Dorsolateral prefrontal cortex (tissue), 120 donors: ENCODE measurements at regions of chr12 and their contacts with region 1.

Region 1: DNA sequence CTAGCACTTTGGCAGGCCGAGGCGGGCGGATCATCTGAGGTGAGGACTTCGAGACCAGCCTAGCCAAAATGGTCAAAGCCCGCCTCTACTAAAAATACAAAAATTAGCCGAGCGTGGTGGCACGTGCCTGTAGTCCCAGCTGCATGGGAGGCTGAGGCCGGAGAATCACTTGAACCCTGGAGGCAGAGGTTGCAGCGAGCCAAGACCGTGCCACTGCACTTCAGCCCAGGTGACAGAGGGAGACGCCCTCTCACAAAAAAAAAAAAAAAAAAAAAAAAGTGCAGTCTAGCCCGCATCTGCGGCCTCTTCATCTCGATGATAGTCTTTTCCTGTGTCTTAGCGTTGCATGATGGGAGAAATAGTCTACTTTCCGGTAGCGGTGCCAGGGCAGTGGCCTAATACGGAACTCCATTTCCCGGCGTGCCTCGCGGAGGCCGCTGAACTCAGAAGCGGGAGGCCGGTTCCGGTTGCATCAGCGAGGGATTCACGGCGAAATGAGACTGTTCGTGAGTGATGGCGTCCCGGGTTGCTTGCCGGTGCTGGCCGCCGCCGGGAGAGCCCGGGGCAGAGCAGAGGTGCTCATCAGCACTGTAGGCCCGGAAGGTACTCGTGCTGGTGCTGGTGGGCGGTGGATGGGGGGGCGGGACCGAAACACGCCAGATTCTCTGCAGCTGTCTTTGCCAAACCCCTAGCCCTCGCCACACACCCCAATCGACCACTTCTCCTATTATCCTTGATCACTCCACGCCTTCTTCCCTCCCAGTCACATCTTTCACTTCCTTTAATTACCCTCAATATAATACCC is at the start of gene MARS1:
- DNase-seq: peak; percentile 94 to 99 (median 96)
- H3K4me3 ChIP-seq: peak within 1 kb of the TSS; percentile 69 to 99 (median 91)
- H3K27ac ChIP-seq: peak within 1 kb of the TSS in 52 of 59 donors; percentile 25 to 89 (median 74)
- H3K27me3 ChIP-seq: no peaks in the 10 kb centered on the region
- CTCF ChIP-seq: peak in 47 of 56 donors; percentile 14 to 69 (median 48)
- total RNA-seq, gene MARS1: 134 to 299 (median 183) TPM

Region 2: DNA sequence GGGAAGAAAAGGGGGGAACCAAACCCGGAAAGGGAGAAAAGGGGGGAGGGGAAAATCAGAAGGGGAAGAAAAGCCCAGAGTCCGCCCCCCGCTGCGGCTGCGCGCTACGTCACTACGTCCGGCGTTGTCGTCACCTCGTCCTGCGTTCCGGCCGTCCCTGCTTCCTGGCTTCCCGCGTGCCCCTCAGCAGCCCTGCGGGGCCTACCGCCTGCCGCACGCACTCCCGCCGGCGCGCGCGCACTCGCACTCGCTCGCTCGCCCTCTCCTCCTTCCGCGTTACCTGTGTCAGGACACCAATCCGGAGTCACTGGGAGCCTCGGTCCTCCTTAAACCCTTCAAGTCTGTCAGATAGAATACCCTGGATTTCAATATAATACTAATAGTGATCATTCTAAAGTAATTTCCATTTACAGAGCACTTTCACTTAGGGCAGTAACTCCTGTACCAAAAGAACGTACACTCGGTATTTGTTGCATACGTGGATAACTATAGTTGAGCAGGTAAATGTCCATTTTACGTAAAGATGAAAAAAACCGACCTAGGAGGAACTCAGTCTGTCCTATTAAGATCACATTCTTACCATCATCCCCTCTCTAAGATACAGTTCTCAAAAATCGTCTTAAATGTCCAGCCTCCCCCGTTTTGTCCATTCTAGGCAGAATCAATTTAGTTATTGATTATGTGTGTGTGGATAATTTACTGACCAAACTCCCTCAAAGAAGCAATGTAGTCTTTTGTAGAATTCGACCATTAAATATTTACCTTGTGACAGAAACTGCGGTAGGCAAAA is 56.7 kb before region 1 on chr12 and contains the start of gene R3HDM2:
- intact Hi-C with region 1: loop called in 1 of 2 experiments (anchors 2 kb)
- DNase-seq: peak; percentile 91 to 97 (median 94)
- H3K4me3 ChIP-seq: peak within 1 kb of the TSS; percentile 45 to 88 (median 74)
- H3K27ac ChIP-seq: peak within 1 kb of the TSS; percentile 53 to 98 (median 91)
- H3K27me3 ChIP-seq: no peaks in the 10 kb centered on the region
- CTCF ChIP-seq: peak in 29 of 56 donors; percentile 14 to 47 (median 29)
- total RNA-seq, gene R3HDM2: 109 to 241 (median 155) TPM

Region 3: GRCh38 chr12:57461276-57461916 is 26.4 kb before region 1 on chr12:
- intact Hi-C with region 1: loop called in 1 of 2 experiments (anchors 2 kb)
- DNase-seq: peak in 1 of 10 donors; percentile 33
- H3K4me3 ChIP-seq: peak overlapping the region; percentile 37 to 84 (median 65)
- H3K27ac ChIP-seq: peak overlapping the region in 5 of 59 donors; percentile 12 to 81 (median 65)
- H3K27me3 ChIP-seq: peaks cover 0 to 15% (median 0%) of the 10 kb centered on the region in 45 donors
- CTCF ChIP-seq: peak in 1 of 56 donors; percentile 4

Region 4: DNA sequence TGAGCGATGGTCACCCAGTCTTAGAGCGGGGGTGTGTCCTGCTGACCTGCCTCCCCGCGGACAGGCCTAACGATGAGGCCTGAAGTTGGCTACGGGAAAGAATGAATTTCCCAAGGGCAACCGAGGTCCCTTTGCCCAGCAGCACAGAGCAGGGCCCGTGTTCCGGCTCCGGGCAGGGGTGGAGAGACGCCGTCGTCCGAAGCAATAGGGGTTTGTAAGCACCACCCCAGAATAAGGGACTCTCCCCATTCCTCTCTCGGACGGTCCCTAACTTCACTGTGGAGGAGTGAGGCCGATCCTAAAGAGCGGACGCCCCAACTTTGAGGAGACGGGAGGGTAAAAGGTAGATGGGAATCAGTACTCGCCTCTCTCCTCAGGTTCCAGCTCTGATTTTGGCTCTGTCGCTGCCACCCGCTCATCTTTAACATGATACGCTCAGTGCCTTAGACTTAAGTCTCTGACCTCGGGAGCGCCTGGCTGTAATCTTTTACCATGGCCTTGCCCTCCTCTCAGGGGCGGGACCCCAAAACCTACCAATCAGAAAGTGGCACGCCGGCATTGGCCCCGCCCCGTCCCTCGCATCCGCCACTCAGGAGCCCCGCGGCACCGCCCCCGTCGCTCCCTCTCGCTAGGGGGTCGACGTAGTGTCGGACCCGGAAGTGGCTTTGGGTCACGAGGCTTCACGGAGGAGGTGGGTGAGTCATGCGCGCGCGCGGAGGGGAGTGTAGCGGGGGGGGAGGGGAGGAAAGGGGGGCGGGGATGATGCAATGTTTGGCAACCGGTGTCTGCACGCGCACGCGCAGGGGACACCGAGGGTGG is 32.5 kb after region 1 on chr12 and contains the start of gene DDIT3:
- intact Hi-C with region 1: loop called (anchors 2 to 5 kb)
- DNase-seq: peak; percentile 97 to 99 (median 99)
- H3K4me3 ChIP-seq: peak within 1 kb of the TSS; percentile 61 to 100 (median 96)
- H3K27ac ChIP-seq: peak within 1 kb of the TSS; percentile 92 to 100 (median 100)
- H3K27me3 ChIP-seq: no peaks in the 10 kb centered on the region
- CTCF ChIP-seq: peak in 10 of 56 donors; percentile 4 to 33 (median 14)
- total RNA-seq, gene DDIT3: 17.0 to 102 (median 32.4) TPM

Region 5: GRCh38 chr12:57874166-57875108 is 386.6 kb after region 1 on chr12:
- intact Hi-C with region 1: no loop called
- DNase-seq: peak in 1 of 10 donors; percentile 69
- H3K4me3 ChIP-seq: peak overlapping the region in 1 of 59 donors; percentile 1
- H3K27ac ChIP-seq: peak overlapping the region in 26 of 59 donors; percentile 1 to 89 (median 33)
- H3K27me3 ChIP-seq: no peaks in the 10 kb centered on the region
- CTCF ChIP-seq: no peak